Cardiac septum (tissue), 1 donor: ENCODE measurements at regions of chr1 and their contacts with region 1.

Region 1: DNA sequence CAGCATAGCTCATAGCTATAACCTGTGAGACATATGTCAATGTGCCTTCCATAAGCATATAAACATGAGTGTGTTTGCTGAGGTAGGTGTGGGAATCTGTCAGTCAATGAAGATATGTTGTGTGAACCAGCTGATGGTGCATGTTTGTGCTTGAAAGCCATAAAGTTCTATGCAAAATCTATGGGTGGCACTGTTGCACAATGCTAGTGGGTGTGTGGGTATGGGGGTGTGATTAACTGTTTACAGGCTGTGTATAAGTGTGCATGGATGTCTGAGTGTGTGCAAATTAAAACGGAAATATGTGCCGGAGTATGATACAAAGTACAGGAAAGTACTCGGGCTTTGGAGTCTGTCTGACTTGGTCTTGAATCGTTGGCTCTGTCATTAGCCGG is 1.0 kb upstream of the ATP2B4 start:
- DNase-seq: no peak

Region 2: DNA sequence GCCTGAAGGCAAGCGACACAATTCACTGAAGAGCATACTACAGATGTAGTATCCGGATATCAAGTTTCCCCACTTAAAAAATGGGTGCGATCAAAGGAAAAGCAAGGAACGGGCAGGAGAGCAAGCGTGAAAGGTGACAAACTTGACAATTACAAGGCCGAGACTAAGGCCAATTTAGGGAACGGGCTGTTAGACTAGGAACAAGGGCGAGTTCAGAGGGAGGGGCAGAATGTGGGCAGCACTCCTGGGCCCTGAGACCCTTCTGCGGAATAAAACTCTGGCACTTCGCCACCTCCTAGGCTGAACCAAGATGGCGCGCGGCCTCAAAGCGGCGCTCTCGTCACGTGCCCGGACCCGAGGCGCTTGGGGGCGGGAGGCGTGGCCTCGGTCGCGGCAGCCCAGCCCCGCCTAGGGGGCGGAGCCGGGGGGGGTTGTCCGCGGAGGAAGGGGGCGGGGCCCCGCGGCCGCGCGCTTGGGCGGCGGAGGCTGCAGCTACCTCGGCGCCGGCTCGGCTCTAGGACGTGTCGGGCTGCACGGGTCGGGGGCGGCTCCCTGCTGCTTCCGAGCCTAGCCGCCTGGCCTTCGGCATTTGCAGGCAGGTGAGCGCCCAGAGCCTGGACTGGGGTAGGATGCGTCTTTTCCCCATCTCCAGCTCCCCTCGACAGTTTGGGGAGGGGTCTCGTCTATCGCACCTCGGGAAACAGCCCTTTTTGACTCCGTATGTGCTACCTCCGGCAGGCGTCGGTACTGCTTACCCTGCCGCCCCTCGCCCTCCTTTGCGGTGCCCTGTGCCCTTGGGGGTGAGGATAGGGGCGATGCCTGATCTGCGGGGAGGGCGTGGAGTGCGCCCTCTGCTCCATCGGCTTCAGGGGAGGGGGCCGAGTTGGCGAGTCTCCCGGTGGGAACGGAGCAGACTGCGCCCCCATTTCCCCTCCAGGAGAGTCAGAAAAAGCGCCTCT is 599.3 kb before region 1 on chr1 and contains the start of gene PPFIA4:
- intact Hi-C with region 1: no loop called
- DNase-seq: peak; percentile 95
- total RNA-seq, gene PPFIA4: 46.7 TPM

Region 3: DNA sequence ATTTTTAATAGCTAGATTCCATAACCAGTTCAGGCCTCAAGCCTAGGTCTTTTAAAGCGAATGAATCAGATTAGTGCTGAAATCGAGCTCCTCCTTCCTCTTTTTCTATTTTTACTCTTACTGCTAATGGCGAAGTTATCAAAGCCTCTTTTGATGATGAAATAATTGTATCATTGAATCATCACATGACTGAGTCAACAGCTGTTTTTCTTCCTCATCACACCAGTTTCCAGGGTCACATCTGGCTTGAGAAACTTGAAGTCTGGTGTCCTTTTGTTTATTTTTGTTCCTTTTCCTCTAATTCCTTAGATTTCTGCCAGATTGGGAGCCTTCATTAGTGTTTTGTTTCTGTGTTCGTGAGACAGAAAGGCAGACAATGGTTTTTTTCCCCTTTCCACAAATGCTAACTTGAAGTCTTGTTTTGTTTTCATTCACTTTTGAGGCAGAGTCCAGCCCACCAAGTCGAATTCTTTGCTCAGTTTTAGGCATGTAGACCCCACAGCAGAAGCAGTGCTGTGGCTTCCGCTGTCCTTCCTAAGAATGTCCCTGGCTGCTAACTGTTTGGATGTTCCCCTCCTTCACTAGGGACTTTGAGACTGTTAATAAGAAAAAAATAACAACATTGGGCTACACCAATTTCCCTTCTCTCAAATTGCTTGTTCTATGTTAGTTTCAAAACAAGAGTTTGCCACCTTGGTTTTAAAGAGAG is 222.8 kb before region 1 on chr1:
- intact Hi-C with region 1: no loop called
- DNase-seq: no peak

Region 4: GRCh38 chr1:203504397-203505250 is 121.0 kb before region 1 on chr1:
- intact Hi-C with region 1: loop called (anchors 2 kb)
- DNase-seq: peak; percentile 83

Region 5: DNA sequence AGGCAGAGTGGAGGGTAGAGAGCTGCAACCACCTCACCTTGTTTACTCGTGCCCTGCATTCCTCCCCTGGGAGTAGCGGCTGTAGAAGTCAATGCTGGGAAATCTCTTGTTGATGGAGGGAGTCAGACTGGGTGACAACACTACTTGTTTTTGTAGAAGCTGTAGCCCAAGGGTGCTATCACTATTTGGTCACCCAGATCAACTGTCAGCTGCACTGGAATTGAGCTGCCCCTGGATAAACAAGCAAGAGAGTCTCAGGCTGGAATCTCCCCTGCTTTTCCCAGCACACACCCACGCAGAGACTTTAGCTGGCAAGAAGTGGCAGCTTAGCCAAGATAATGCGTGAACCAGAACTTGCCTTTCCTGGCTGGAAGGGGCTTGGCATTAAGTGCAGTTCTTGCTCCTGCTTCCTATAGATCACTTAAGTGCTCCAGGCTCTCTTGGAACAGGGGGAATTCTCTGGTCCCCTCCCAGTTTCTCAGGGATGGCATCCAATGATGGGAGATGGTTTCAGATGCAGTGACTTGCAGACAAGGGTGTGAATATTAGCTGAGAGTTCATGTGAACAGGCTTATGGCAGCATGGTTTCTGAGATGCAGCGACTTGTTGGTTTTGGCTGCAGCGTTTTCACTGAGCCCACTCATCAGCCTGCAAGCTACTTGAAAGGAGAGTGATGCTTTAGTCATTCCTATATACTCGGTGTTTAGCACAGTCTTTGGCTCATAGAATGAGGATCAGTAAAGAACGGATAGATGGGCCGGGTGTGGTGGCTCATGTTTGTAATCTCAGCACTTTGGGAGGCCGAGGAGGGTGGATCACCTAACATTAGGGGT is 17.8 kb after region 1 on chr1:
- intact Hi-C with region 1: loop called (anchors 2 kb)
- DNase-seq: no peak

Region 6: DNA sequence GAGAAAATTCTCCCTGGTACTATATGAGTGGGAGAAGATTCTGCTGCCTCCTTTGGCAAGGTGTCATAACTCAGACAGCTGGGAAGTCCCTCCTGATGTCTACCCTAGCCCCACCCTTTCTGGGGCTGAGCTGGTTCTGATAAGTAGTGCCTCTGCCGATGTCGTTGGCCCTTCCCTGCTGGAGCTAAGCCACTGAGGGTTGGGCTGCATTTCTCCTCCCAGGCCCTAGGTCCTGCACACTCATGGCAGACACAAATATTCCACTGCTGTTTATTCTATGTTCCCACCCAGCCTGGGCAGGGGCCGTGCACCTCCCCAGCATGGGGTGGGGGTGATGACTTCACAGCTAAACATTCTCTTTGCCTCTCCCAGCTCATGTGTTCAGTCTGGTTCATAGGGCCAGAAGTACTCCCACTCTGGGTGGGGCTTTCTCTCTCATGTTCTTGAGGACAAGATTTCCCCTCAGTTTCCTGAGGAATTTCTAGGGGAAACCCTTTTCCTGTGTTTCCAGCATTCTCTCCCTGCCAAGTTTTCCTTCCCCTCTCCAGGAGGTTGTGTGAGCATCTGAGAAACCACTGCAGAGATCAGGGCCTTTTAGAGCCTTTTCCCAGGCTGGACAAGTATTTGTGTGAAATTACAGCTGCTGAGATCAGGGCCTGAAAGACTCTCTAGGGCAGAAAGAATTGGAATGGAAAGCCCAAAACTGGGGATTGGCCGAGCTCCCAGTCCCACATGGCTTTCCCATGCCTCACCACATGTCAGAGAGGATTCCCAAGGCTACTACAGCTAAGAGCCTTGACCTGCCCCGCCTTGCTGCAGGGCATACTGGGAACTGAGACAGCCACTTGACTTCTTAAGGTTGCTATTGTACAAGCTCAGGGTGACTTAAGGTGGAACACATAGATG is 67.2 kb after region 1 on chr1:
- intact Hi-C with region 1: loop called (anchors 1 kb)
- DNase-seq: peak; percentile 90

Region 7: DNA sequence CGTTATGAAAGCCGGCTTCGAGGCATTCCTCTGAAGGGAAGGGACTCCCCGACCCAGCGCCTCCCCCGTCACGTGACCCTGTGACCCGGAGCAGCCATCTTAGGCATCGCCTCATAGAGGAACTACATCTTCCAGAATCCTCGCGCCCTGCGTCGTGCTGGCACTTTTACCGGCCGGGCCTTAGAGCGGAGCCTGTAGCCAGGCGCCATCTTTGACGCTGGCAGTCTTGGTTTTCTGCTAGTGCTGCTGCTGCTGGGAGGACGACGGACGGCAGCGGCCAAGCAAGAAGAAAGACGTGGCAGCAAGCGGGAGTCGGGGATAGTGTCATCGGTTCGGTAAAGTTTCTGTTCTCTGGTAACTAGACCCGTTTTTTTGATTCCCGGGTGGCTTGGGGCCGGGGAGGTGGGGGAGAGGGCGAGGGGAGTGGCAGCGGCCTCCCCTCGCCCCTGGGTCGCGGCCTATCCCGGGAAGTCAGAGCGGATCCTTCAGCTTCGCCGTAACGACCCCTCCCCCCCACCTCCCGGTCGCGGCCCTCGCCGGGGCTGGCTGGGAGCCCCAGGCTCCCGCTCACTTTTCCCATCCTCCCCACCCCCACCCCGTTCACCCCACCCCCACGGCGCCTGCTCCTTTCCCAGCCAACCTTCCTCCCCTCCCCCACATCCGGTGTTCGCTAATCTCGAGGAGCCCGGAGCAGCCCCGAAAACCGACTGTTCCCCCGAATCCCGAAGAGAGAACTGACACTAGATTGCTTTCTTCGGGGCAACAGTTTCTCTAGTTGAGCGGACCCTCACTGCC is 170.0 kb after region 1 on chr1 and contains the starts of genes ZBED6 and ZC3H11A:
- intact Hi-C with region 1: loop called (anchors 5 kb)
- DNase-seq: peak; percentile 100
- total RNA-seq, gene ZBED6: 18.4 TPM
- total RNA-seq, gene ZC3H11A: 46.9 TPM